ENCODE measurements at regions of chr3 and their contacts with region 1.

Region 1: DNA sequence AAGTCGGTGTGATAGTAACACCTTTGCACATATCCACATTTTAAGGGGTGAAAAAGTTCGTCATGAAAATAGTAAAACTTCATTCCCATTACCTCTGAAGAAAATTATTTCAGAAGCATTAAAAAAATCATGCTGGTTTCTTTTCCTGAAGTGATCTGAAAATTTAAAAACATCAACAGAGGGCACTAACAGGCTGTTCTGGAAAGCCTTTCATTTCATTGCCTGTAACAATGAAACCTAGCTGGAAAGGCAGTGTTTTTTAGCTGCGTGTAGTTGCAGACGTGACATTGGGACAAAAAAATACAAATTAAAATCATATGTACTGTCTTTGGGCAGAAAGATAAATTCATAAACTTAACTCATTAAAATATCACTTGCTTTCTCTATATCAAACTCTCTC is 993.8 kb downstream of the GBE1 start:
- DNase-seq: no peak

Region 2: DNA sequence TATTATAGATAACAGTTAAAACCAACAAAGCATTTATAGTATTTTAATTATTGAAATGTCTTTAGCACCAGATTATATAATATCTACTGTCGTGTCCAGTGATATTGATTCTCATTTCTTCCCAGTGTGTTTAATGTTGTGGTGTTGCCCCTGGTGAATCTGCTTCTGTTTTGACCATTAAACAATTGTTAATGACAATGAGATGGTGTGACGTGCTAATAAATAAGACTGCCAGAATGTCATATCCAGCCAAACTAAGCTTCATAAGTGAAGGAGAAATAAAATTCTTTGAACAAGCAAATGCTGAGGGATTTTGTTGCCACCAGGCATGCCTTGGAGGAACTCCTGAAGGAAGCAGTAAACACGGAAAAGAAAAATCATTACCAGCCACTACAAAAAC is 519.8 kb before region 1 on chr3:
- intact Hi-C with region 1: loop called in 1 of 2 experiments (anchors 5 kb)
- DNase-seq: no peak